ENCODE measurements at regions of chr6 and their contacts with region 1.

Region 1: DNA sequence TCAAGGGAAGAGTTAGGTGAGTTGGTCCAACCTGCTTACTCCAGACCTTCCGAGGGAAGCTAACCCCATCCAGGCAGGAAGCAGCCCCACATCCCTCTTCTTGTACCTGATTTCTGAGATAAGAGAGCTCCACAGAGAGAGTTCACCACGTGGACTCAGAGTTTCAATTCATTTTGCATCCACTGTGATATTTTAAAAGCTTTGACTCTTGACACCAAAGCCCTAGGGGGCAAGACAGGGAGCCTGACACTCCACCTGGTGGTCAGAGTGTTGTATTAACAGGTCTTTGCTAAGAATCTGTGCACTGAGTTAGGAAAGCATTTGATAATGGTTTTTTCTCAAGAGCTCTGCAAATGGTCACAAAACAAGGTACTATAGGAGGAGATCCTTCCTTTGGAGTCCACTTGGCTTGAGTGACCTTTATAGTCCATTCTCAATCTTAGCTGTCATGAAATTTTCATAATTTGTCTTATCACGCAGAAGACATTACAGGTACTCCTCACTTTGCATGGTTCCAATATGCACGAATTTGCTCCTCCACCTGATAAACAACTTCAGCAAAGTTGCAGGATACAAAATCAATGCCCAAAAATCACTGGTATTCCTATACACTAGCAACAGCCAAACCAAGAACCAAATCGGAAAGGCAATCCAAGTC is 56.2 kb upstream of the RIPOR2 start:
- DNase-seq: peak; percentile 87
- ATAC-seq: peak; percentile 97
- H3K4me3 Mint-ChIP-seq: no peak overlapping the region
- H3K27ac Mint-ChIP-seq: peak overlapping the region; percentile 67
- H3K4me1 Mint-ChIP-seq: peaks cover 27% of the 10 kb centered on the region
- H3K27me3 Mint-ChIP-seq: no peaks in the 10 kb centered on the region

Region 2: GRCh38 chr6:24646782-24647181 is 345.2 kb before region 1 on chr6:
- CTCF ChIA-PET with region 1: no interaction called
- DNase-seq: no peak
- ATAC-seq: no peak
- H3K4me3 Mint-ChIP-seq: peak overlapping the region; percentile 81
- H3K27ac Mint-ChIP-seq: no peak overlapping the region
- H3K4me1 Mint-ChIP-seq: peaks cover 16% of the 10 kb centered on the region
- H3K27me3 Mint-ChIP-seq: peaks cover 26% of the 10 kb centered on the region

Region 3: DNA sequence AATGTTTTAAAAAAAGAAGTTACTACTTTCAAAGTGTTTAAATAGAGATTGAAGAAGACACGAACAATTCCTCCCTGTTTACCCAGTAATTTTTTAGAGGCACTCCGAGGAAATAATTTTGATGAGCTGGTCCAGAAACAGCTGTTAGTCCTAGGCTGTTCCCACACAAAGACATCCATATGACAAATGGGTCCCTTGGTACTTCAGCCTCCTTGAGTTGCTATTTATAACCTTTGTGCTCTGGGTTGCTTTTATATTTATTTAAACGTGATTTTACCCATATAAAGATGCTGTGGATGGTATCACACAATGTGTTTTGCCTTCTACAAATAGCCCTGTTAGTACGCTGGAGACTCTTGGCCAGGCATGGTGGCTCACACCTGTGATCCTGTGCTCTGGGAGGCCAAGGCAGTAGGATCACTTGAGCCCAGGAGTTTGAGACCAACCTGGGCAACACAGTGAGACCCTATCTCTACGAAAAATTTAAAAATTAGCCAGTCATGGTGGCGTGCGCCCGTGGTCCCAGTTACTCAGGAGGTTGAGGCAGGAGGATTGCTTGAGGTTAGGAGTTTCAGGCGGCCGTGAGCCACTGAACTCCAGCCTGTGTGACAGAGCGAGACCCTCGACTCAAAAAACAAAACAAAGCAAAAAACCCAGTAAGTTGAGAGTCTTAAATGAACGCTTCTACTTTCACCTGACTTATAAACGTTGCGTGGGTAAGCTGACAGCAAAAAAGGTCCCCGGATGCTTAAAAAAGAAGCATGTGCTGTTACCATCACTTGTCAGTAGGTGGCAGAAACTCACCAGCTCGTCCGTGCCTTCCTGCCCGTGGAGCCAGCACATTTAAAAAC is 136.3 kb before region 1 on chr6:
- CTCF ChIA-PET with region 1: interaction called, 107 read pairs
- DNase-seq: peak; percentile 78
- ATAC-seq: peak; percentile 60
- H3K4me3 Mint-ChIP-seq: no peak overlapping the region
- H3K27ac Mint-ChIP-seq: peak overlapping the region; percentile 88
- H3K4me1 Mint-ChIP-seq: peaks cover 52% of the 10 kb centered on the region
- H3K27me3 Mint-ChIP-seq: no peaks in the 10 kb centered on the region

Region 4: DNA sequence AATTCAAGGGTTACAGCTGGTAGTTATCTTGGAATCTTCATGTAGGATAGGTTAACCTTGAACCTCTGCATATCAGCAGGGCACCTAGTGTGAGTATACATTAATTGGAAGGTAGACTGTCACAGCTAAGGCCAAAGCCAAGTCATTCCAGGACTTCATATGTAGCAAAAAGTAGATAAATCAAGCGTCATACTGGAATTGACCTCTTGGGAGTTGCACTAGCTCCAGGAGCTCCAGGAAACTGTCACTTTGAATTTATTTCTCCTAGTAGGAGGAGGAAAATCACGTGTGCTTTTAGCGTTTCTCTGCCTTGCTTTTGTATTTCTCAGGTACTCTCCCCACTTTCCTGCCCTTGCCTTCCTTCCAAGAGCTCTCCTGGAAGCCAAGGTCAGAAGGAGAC is 86.5 kb before region 1 on chr6:
- CTCF ChIA-PET with region 1: interaction called, 32 read pairs
- DNase-seq: no peak
- ATAC-seq: no peak
- H3K4me3 Mint-ChIP-seq: no peak overlapping the region
- H3K27ac Mint-ChIP-seq: no peak overlapping the region
- H3K4me1 Mint-ChIP-seq: peaks cover 64% of the 10 kb centered on the region
- H3K27me3 Mint-ChIP-seq: no peaks in the 10 kb centered on the region

Region 5: DNA sequence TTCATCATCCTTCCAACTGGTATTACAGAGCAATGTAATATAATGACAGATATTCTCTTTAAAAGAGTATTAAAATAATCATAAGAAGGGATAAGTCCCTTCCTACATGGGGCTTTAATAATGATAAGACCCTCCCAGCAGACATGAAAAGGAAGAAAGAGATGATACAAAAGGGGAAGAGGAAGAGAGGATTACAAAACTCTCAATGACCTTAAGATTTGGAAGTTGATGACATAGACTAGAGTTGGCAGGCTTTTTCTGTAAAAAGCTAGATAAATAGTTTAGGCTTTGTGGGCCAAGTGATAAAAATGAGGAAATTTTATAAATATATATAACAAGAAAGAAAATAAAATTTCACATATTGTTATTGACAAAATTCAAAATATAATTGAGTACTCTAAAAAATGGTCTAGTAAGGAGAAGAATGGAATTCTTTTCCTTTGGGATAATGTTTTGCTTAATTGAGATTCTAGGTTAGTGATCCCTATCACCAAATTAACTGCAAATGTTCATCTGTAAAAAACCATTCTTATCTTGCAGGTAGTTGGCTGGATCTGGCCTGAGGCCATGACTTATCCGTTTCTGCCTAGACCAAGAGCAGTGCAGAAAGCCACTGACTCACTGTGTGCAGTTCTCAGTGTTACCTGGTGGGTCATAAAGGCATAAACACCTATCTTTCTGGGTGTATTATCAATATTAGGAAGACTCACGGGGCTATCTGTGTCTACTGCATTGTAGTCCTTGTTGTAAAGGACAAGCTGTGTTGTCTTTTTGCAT is 67.2 kb before region 1 on chr6:
- CTCF ChIA-PET with region 1: interaction called, 225 read pairs
- DNase-seq: no peak
- ATAC-seq: no peak
- H3K4me3 Mint-ChIP-seq: no peak overlapping the region
- H3K27ac Mint-ChIP-seq: peak overlapping the region; percentile 29
- H3K4me1 Mint-ChIP-seq: peaks cover 72% of the 10 kb centered on the region
- H3K27me3 Mint-ChIP-seq: peaks cover 3% of the 10 kb centered on the region

Region 6: DNA sequence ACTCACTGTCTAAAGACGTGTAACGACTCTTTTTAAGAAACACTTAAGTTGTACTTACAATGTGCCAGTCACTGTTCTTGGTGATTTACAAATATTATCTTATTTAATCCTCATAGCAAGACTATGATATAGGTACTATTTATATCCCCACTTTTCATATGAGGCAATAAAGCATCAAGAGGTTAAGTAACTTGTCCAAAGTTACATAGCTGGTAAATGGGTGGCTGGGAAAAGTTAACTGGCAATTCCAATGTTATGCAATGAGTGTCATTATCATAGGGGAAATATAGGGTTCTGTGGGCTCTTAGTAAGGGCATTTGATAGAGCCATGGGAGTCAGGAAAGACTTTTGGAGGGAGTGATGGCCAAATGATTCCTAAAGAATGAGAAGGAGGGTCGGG is 34.7 kb before region 1 on chr6:
- CTCF ChIA-PET with region 1: interaction called, 24 read pairs
- DNase-seq: no peak
- ATAC-seq: no peak
- H3K4me3 Mint-ChIP-seq: no peak overlapping the region
- H3K27ac Mint-ChIP-seq: peak overlapping the region; percentile 73
- H3K4me1 Mint-ChIP-seq: peaks cover 68% of the 10 kb centered on the region
- H3K27me3 Mint-ChIP-seq: no peaks in the 10 kb centered on the region

Region 7: DNA sequence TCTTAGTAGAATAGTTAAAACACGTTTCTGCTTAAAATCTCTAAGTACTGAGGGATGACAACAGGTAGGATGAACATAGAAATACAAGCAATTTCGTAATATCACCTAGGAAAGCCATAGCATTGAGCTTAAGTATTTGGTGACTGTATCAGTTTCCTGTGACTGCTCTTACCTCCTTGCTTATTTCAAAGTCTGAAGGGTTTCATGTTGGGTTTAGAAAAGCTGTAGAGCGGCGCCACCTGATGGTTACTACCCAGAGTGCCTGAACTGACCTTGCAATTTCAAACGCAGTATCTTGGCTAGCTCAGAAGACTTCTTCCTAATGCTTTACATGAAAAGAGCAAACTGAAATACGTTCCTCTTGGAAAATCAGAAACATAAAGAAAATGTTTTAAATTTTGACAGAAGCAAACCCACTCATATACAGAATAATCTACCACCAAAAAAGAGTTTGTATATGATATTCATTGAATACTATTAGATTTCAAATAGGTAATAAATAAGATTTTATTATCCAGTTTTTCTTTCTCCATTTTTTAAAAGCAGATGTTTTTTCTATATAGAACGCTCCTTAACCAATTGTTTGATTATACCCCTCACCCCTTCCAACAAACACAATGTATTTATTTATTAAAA is 26.1 kb after region 1 on chr6:
- CTCF ChIA-PET with region 1: interaction called, 29 read pairs
- DNase-seq: peak; percentile 87
- ATAC-seq: peak; percentile 89
- H3K4me3 Mint-ChIP-seq: no peak overlapping the region
- H3K27ac Mint-ChIP-seq: peak overlapping the region; percentile 39
- H3K4me1 Mint-ChIP-seq: peaks cover 33% of the 10 kb centered on the region
- H3K27me3 Mint-ChIP-seq: no peaks in the 10 kb centered on the region

Region 8: GRCh38 chr6:25100288-25100687 is 108.3 kb after region 1 on chr6:
- CTCF ChIA-PET with region 1: no interaction called
- DNase-seq: no peak
- ATAC-seq: no peak
- H3K4me3 Mint-ChIP-seq: no peak overlapping the region
- H3K27ac Mint-ChIP-seq: no peak overlapping the region
- H3K4me1 Mint-ChIP-seq: peaks cover 10% of the 10 kb centered on the region
- H3K27me3 Mint-ChIP-seq: no peaks in the 10 kb centered on the region

Region 9: GRCh38 chr6:25404693-25405169 is 412.8 kb after region 1 on chr6:
- CTCF ChIA-PET with region 1: no interaction called
- DNase-seq: peak; percentile 69
- ATAC-seq: peak; percentile 94
- H3K4me3 Mint-ChIP-seq: no peak overlapping the region
- H3K27ac Mint-ChIP-seq: no peak overlapping the region
- H3K4me1 Mint-ChIP-seq: peaks cover 16% of the 10 kb centered on the region
- H3K27me3 Mint-ChIP-seq: no peaks in the 10 kb centered on the region

Measured in activated CD8-positive, alpha-beta memory T cell treated with anti-CD3 and anti-CD28 coated beads, Interleukin-2, amount 10 ng/mL, durations not matched to agents 7 days and 5 days (primary cell).